Motor neuron (in vitro differentiated cells): ENCODE measurements at regions of chr5 and their contacts with region 1.

Region 1: GRCh38 chr5:54229041-54229780 is 81.2 kb downstream of the ARL15 start:
- ATAC-seq: peak in 4 of 8 experiments; percentile 62 to 82 (median 76)
- H3K4me3 ChIP-seq: no peak overlapping the region
- H3K27ac ChIP-seq: no peak overlapping the region
- H3K4me1 ChIP-seq: no peaks in the 10 kb centered on the region

Region 2: GRCh38 chr5:53469946-53470687 is 759.1 kb before region 1 on chr5:
- in situ Hi-C with region 1: loop called in 4 of 9 experiments (anchors 25 kb)
- ATAC-seq: no peak
- H3K4me3 ChIP-seq: no peak overlapping the region
- H3K27ac ChIP-seq: no peak overlapping the region
- H3K4me1 ChIP-seq: no peaks in the 10 kb centered on the region

Region 3: GRCh38 chr5:54390015-54390414 is 160.8 kb after region 1 on chr5:
- in situ Hi-C with region 1: no loop called
- ATAC-seq: peak in 7 of 8 experiments; percentile 32 to 96 (median 71)
- H3K4me3 ChIP-seq: no peak overlapping the region
- H3K27ac ChIP-seq: no peak overlapping the region
- H3K4me1 ChIP-seq: peaks cover 2 to 9% of the 10 kb centered on the region in 2 donors

Region 4: DNA sequence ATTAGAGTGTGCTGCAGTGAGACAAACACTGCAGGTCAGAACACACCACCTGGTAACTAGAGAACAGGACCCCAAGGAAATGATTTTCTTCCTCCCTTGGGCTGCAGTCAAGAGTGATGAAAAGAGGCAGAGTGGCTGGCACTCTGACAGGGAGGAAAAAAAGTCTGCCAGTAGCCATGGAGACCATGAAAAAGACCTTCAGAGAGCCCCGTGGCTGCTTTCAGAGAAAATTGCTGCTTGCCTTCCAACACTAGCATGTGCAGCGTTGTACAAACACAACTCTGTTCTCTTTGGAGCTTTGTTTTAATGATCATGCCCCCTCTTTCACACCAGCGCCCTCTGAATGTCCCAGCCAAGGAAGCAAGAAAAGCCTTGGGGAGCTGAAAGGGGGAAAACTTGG is 1935.2 kb after region 1 on chr5:
- in situ Hi-C with region 1: no loop called
- ATAC-seq: peak in 5 of 8 experiments; percentile 84 to 91 (median 90)
- H3K4me3 ChIP-seq: no peak overlapping the region
- H3K27ac ChIP-seq: peak overlapping the region; percentile 60 to 68
- H3K4me1 ChIP-seq: peaks cover 41 to 51% of the 10 kb centered on the region in 2 donors